ENCODE measurements at regions of chr1 and their contacts with region 1.

Region 1: GRCh38 chr1:42958488-42959319 is at the start of gene SLC2A1:
- DNase-seq: peak; percentile 97
- ATAC-seq: peak; percentile 88
- H3K4me3 Mint-ChIP-seq: peak within 1 kb of the TSS; percentile 99
- H3K27ac Mint-ChIP-seq: peak within 1 kb of the TSS; percentile 96
- H3K4me1 Mint-ChIP-seq: peaks cover 63% of the 10 kb centered on the region
- H3K27me3 Mint-ChIP-seq: peaks cover 7% of the 10 kb centered on the region
- total RNA-seq, gene SLC2A1: 113 to 123 TPM

Region 2: DNA sequence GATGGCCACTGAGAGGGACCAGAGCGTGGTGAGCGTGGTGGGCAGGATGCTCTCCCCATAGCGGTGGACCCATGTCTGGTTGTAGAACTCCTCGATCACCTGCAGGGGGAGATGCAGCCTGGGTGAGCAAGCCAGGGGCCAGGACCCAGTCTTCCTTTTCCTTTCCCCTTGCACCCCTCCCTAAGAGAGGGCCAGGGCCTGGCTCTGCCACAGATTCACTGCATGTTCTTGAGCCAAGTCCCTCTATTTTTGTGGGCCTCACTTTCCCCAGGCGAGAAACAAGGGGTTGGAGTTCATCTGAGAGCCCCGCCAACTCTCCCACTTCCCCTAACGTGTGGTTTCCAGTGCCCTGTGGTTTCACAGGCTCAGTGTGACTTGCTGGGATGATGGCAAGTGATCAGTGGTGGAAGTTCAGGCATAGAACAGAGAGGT is 27.6 kb before region 1 on chr1:
- CTCF ChIA-PET with region 1: interaction called, 13 read pairs
- POLR2A ChIA-PET with region 1: interaction called, 16 read pairs
- DNase-seq: peak; percentile 78
- ATAC-seq: peak; percentile 44
- H3K4me3 Mint-ChIP-seq: peak overlapping the region; percentile 74
- H3K27ac Mint-ChIP-seq: peak overlapping the region; percentile 97
- H3K4me1 Mint-ChIP-seq: peaks cover 97% of the 10 kb centered on the region
- H3K27me3 Mint-ChIP-seq: no peaks in the 10 kb centered on the region

Region 3: DNA sequence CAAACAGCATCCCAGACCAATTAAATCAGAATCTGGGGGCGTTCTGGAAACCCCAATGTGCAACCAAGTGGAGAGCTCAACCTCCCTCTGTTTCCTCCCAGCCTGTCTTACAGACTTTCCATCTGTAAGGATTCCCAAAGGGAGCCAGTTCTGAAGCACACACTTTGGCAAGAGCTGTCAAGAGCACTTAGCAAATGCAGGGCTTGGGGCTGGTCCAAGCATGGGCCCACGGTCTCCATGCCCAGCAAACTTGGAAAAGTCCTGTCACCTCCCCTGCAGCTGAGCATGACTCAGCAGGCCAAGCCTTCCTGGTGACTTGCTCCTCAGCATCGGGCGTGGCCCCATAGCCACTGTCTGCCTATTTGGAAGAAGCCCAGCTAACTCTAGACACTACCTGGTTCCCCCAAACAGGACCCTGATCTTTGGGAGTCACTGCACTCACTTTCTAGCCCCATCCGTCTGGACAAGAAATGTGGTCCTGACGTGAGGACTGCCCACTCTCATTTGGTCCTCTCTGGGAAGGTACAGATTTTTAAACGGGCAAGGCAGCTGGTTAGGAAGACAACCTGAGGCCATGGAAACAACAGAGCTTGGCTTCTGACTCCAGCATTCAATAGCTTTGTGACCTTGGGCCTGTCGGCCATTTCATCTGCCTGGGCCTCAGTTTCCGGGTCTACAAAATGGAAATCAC is 16.9 kb before region 1 on chr1:
- CTCF ChIA-PET with region 1: interaction called, 4 read pairs
- POLR2A ChIA-PET with region 1: interaction called, 10 read pairs
- DNase-seq: no peak
- ATAC-seq: no peak
- H3K4me3 Mint-ChIP-seq: no peak overlapping the region
- H3K27ac Mint-ChIP-seq: peak overlapping the region; percentile 86
- H3K4me1 Mint-ChIP-seq: peaks cover 98% of the 10 kb centered on the region
- H3K27me3 Mint-ChIP-seq: no peaks in the 10 kb centered on the region

Region 4: GRCh38 chr1:42999308-42999707 is 40.6 kb after region 1 on chr1:
- CTCF ChIA-PET with region 1: no interaction called
- POLR2A ChIA-PET with region 1: no interaction called
- DNase-seq: no peak
- ATAC-seq: no peak
- H3K4me3 Mint-ChIP-seq: no peak overlapping the region
- H3K27ac Mint-ChIP-seq: no peak overlapping the region
- H3K4me1 Mint-ChIP-seq: no peaks in the 10 kb centered on the region
- H3K27me3 Mint-ChIP-seq: no peaks in the 10 kb centered on the region